Esophagus squamous epithelium (tissue), 5 donors: ENCODE measurements at regions of chr20 and their contacts with region 1.

Region 1: GRCh38 chr20:56468316-56469082 is at the start of gene RTF2:
- DNase-seq: peak; percentile 65
- H3K4me3 ChIP-seq: peak within 1 kb of the TSS; percentile 59 to 85 (median 70)
- H3K27ac ChIP-seq: peak within 1 kb of the TSS; percentile 90 to 95 (median 90)
- H3K4me1 ChIP-seq: peaks cover 6 to 45% (median 12%) of the 10 kb centered on the region in 3 donors
- H3K27me3 ChIP-seq: no peaks in the 10 kb centered on the region
- CTCF ChIP-seq: peak in 1 of 6 experiments; percentile 35
- POLR2A ChIP-seq: peak in 1 of 4 donors; percentile 59
- total RNA-seq, gene RTF2: 40.3 to 53.6 (median 44.7) TPM

Region 2: DNA sequence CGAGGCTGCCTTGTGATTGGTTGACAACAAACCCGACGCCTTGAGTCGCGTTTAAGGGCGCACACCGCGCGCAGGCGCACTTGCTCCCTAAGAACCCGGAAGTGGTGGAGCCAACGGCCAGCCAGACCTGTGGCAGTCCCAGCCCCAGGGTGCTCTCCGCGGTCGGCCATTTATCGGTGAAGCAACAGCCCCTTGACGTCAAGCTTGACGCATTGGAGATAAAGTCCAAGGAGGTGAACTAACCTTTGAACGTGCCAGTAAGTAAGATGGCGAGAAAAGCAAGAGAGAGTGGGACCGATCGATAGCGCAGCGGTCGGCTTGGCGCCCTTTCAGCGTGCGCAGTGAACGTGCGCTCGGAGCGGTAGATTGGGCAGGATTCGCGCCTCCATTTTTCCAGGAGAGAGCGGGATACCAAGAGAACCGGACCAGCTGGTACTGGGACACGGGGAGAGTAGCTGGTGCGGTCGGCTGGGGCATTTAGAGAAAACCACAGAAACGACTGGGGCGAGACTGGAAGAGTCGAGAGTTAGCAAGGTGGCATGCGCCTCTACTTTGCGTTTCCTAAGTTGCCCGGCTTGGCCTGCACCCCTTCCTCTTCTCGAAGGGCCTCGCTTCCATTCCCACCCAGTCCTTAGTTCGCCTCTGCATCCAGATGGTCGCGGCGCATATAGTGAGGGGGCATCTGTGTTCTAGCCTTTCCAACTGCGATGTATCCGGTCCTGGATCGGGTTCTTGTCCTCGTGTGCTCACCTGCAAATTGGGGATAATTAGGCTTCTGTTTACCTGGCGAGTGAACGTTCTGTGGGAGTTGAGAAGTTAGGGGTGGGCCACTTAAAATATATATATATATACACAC is 76.0 kb before region 1 on chr20 and contains the start of gene CSTF1:
- intact Hi-C with region 1: loop called (anchors 10 kb)
- DNase-seq: peak; percentile 96
- H3K4me3 ChIP-seq: peak within 1 kb of the TSS; percentile 71 to 92 (median 82)
- H3K27ac ChIP-seq: peak within 1 kb of the TSS; percentile 83 to 96 (median 90)
- H3K4me1 ChIP-seq: peaks cover 19 to 38% (median 22%) of the 10 kb centered on the region in 3 donors
- H3K27me3 ChIP-seq: no peaks in the 10 kb centered on the region
- CTCF ChIP-seq: peak in 1 of 6 experiments; percentile 22
- POLR2A ChIP-seq: peak in 1 of 4 donors; percentile 33
- total RNA-seq, gene CSTF1: 13.2 to 33.5 (median 24.1) TPM